ENCODE measurements at regions of chr5 and their contacts with region 1.

Region 1: DNA sequence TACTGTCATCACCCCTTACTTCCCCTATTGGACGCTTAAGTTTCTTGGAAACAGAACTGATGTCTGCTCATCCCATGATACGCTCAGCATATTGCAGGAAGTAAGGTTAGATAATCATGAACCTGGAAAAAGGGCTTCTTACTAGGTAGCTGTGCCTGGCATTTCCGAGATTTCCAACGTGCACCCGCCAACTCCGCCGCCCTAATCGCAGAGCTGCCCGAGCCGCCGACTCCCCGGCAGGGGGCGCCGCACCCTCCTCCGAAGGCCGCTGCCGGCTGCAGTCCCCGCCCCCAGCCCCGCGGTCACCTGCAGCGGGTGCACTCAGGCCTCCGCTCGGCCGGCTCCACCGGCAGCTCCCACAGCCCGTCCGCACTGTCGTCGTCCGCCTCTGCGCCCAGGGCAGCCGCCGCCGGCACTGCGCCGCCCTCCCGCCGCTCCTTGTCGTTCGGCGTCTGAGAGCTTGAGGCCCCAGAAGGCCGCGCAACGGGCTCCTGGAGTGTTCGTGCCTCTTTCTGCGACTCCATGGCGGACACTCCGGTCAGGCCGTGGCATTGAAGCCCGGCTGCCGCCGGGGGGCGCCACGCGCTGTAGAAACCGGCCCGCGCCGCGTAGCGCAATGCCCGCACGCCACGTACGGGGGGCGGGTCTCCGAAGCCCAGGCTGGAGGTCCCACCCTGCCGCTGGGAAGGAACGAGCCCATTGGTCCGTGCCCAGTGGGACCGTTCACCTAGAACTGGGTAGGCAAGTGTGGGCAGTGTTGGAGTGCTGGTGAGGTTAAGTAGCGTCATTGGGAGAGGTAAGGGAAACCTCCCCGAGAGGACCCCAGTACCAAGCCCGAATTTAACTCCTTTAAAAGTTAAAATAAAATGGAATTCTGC is at the start of gene DTWD2:
- DNase-seq: peak; percentile 97
- H3K4me3 Mint-ChIP-seq: peak within 1 kb of the TSS; percentile 83
- H3K27ac Mint-ChIP-seq: peak within 1 kb of the TSS; percentile 57
- H3K4me1 Mint-ChIP-seq: peaks cover 12% of the 10 kb centered on the region
- H3K27me3 Mint-ChIP-seq: peaks cover 2% of the 10 kb centered on the region
- total RNA-seq, gene DTWD2: 1.8 and 2.2 TPM in 2 replicates

Region 2: DNA sequence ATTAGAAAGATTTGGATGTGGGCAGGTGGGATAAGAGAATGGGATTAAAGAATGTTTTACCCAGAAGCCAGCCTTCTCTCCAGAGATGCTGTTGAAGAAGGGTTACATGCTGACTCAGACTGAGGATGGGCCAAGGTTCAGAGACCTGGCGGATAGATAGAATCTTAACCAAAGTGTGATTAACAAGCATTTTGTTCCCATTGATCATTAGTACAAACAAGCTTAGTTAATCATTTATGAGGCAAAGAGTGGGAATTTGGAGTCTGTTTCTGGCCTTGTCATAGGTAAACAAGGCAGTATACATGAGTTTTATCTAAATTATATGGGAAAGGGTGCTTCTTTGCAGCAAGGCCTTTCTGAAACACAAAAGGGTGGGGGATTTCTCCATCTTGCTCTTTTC is 20.9 kb after region 1 on chr5:
- intact Hi-C with region 1: no loop called
- DNase-seq: no peak
- H3K4me3 Mint-ChIP-seq: no peak overlapping the region
- H3K27ac Mint-ChIP-seq: no peak overlapping the region
- H3K4me1 Mint-ChIP-seq: no peaks in the 10 kb centered on the region
- H3K27me3 Mint-ChIP-seq: no peaks in the 10 kb centered on the region

Region 3: GRCh38 chr5:119070828-119071572 is 82.8 kb after region 1 on chr5 and contains the start of gene DMXL1:
- intact Hi-C with region 1: loop called (anchors 1 kb)
- DNase-seq: peak; percentile 99
- H3K4me3 Mint-ChIP-seq: peak within 1 kb of the TSS; percentile 94
- H3K27ac Mint-ChIP-seq: peak within 1 kb of the TSS; percentile 95
- H3K4me1 Mint-ChIP-seq: peaks cover 30% of the 10 kb centered on the region
- H3K27me3 Mint-ChIP-seq: no peaks in the 10 kb centered on the region
- total RNA-seq, gene DMXL1: 22.4 and 25.6 TPM in 2 replicates

Region 4: DNA sequence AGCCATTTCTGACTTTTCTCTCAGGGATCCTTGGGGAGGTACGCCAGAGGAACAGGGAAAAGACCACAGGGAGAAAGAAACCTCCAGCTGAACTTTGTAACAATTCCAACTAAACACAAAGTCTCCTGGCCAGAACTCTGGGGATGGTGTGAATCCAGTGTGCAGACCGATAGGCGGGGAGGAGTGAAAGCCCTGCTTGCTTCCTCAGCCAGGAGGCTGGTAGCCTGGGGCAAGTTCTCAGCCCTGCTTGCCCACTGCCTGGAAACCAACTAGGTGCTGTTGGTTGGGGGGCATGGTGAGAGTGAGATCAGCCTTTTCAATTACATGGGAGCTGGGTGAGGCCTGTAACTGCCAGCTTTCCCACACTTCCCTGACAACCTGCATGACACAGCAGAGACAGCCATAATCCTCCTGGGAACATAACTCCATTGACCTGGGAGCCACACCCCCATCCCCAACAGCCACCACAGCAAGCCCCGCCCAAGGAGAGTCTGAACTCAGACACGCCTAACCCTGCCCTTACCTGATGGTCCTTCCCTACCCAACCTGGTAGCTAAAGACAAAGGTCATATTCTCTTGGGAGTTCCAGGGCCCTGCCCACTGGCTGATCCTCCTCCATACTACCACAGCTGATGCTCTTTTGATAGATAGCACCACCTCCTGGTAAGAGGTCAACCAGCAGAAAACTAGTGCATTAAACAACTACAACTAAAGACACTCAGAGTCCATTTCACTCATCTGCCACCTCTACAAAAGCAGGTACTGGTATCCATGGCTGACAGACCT is 267.5 kb after region 1 on chr5:
- intact Hi-C with region 1: loop called (anchors 1 kb)
- DNase-seq: peak; percentile 61
- H3K4me3 Mint-ChIP-seq: no peak overlapping the region
- H3K27ac Mint-ChIP-seq: peak overlapping the region; percentile 13
- H3K4me1 Mint-ChIP-seq: peaks cover 7% of the 10 kb centered on the region
- H3K27me3 Mint-ChIP-seq: no peaks in the 10 kb centered on the region

Region 5: DNA sequence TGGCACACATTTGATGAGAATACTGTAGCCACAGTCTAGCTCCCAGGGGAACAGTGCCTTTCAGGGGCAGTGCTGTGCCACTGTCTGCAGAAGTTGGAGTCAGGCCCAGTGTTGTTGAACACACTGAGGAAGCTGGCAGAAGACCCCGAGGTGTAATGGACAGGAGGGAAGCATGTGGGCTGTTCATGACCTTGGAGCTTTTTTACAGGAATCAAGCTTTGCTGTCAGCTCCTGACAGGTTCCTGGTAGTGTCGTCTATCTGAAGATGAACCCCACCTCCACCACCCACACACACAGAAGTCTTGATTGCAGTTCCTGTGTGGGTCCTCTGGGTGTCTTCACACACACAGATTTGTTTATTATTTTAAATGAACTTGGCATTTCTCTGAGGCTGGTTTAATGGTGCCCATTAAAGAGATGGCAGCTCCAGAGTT is 327.3 kb after region 1 on chr5:
- intact Hi-C with region 1: loop called (anchors 5 kb)
- DNase-seq: peak; percentile 86
- H3K4me3 Mint-ChIP-seq: peak overlapping the region; percentile 67
- H3K27ac Mint-ChIP-seq: peak overlapping the region; percentile 89
- H3K4me1 Mint-ChIP-seq: peaks cover 81% of the 10 kb centered on the region
- H3K27me3 Mint-ChIP-seq: no peaks in the 10 kb centered on the region

Region 6: GRCh38 chr5:119411935-119412602 is 423.8 kb after region 1 on chr5:
- intact Hi-C with region 1: loop called (anchors 1 kb)
- DNase-seq: peak; percentile 87
- H3K4me3 Mint-ChIP-seq: peak overlapping the region; percentile 85
- H3K27ac Mint-ChIP-seq: peak overlapping the region; percentile 70
- H3K4me1 Mint-ChIP-seq: peaks cover 32% of the 10 kb centered on the region
- H3K27me3 Mint-ChIP-seq: peaks cover 10% of the 10 kb centered on the region

Region 7: GRCh38 chr5:119452373-119453039 is 464.3 kb after region 1 on chr5 and contains the start of gene HSD17B4:
- intact Hi-C with region 1: loop called (anchors 1 kb)
- DNase-seq: peak; percentile 93
- H3K4me3 Mint-ChIP-seq: peak within 1 kb of the TSS; percentile 95
- H3K27ac Mint-ChIP-seq: peak within 1 kb of the TSS; percentile 85
- H3K4me1 Mint-ChIP-seq: peaks cover 15% of the 10 kb centered on the region
- H3K27me3 Mint-ChIP-seq: peaks cover 13% of the 10 kb centered on the region
- total RNA-seq, gene HSD17B4: 52.5 and 70.4 TPM in 2 replicates

Region 8: GRCh38 chr5:119578937-119579336 is 590.7 kb after region 1 on chr5:
- intact Hi-C with region 1: no loop called
- DNase-seq: peak; percentile 57
- H3K4me3 Mint-ChIP-seq: no peak overlapping the region
- H3K27ac Mint-ChIP-seq: no peak overlapping the region
- H3K4me1 Mint-ChIP-seq: no peaks in the 10 kb centered on the region
- H3K27me3 Mint-ChIP-seq: peaks cover 17% of the 10 kb centered on the region

Region 9: GRCh38 chr5:120457839-120458507 is 1469.7 kb after region 1 on chr5:
- intact Hi-C with region 1: loop called (anchors 5 kb)
- DNase-seq: peak; percentile 86
- H3K4me3 Mint-ChIP-seq: peak overlapping the region; percentile 62
- H3K27ac Mint-ChIP-seq: no peak overlapping the region
- H3K4me1 Mint-ChIP-seq: peaks cover 3% of the 10 kb centered on the region
- H3K27me3 Mint-ChIP-seq: peaks cover 20% of the 10 kb centered on the region